MCF 10A (cell line): ENCODE measurements at regions of chr3 and their contacts with region 1.

Region 1: DNA sequence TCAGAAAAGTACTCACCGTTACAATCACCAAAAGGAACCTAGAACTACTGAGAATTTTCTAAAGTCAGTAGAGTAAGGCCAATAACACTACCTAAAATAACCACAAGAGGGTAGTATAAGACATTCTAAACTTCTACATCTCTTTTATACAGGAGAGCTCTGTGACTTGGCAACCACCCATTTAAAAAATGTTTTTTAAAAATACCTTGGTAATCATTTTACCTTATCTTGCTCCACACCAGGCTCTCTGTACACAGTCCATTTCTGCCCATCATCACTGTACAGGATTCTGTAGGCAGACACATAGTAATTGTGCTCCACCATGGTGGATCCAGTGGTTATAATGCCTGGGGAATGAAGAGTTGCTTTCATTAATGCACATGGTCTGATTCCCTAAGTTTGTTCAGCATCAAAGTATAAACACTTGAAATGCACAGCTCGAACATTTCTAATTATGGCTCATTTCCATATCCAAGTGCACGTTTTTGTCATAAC is 54.5 kb downstream of the ST3GAL6 start:
- DNase-seq: peak; percentile 50
- H3K4me3 Mint-ChIP-seq: no peak overlapping the region
- H3K27ac Mint-ChIP-seq: peak overlapping the region; percentile 27
- H3K4me1 Mint-ChIP-seq: peaks cover 13% of the 10 kb centered on the region
- H3K27me3 Mint-ChIP-seq: no peaks in the 10 kb centered on the region
- CTCF ChIP-seq: peak; percentile 53

Region 2: GRCh38 chr3:98980915-98981596 is 163.5 kb after region 1 on chr3:
- CTCF ChIA-PET with region 1: interaction called, 19 read pairs
- POLR2A ChIA-PET with region 1: interaction called, 9 read pairs
- intact Hi-C with region 1: loop called (anchors 1 kb)
- DNase-seq: no peak
- H3K4me3 Mint-ChIP-seq: no peak overlapping the region
- H3K27ac Mint-ChIP-seq: no peak overlapping the region
- H3K4me1 Mint-ChIP-seq: peaks cover 23% of the 10 kb centered on the region
- H3K27me3 Mint-ChIP-seq: no peaks in the 10 kb centered on the region
- CTCF ChIP-seq: no peak

Region 3: DNA sequence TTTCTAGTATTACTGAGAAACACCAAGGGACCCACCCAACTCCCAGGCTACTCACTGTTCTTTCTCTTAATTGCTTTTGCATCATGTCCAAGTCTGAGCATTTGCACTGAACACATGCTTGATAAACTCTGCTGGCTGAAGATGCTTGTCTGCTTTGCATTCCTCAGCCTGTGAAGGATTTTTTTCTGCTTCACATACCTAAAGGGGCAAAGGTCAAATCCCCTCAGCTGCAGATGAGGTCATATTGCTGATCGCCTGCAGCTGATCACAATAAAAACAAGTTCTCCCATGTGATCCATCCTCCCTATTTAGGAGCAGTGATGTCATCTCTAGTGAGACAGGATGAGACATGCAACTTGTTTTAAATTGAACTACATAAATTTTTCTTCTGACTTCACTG is 168.5 kb after region 1 on chr3:
- CTCF ChIA-PET with region 1: interaction called, 19 read pairs
- POLR2A ChIA-PET with region 1: interaction called, 9 read pairs
- intact Hi-C with region 1: loop called (anchors 1 kb)
- DNase-seq: peak; percentile 39
- H3K4me3 Mint-ChIP-seq: no peak overlapping the region
- H3K27ac Mint-ChIP-seq: peak overlapping the region; percentile 57
- H3K4me1 Mint-ChIP-seq: peaks cover 15% of the 10 kb centered on the region
- H3K27me3 Mint-ChIP-seq: no peaks in the 10 kb centered on the region
- CTCF ChIP-seq: no peak